WTC11 (cell line): ENCODE measurements at regions of chr22 and their contacts with region 1.

Region 1: GRCh38 chr22:37824674-37825641 is 1.8 kb downstream of the GALR3 start:
- DNase-seq: peak; percentile 63
- ATAC-seq: peak; percentile 68
- H3K4me3 Mint-ChIP-seq: peak overlapping the region; percentile 57
- H3K27ac Mint-ChIP-seq: no peak overlapping the region
- H3K4me1 Mint-ChIP-seq: peaks cover 28% of the 10 kb centered on the region
- H3K27me3 Mint-ChIP-seq: peaks cover 51% of the 10 kb centered on the region
- CTCF ChIP-seq: no peak

Region 2: GRCh38 chr22:37303821-37304274 is 521.1 kb before region 1 on chr22:
- CTCF ChIA-PET with region 1: no interaction called
- POLR2A ChIA-PET with region 1: no interaction called
- DNase-seq: no peak
- ATAC-seq: no peak
- H3K4me3 Mint-ChIP-seq: no peak overlapping the region
- H3K27ac Mint-ChIP-seq: no peak overlapping the region
- H3K4me1 Mint-ChIP-seq: peaks cover 38% of the 10 kb centered on the region
- H3K27me3 Mint-ChIP-seq: peaks cover 10% of the 10 kb centered on the region
- CTCF ChIP-seq: no peak

Region 3: GRCh38 chr22:37636186-37636948 is 188.6 kb before region 1 on chr22:
- CTCF ChIA-PET with region 1: no interaction called
- POLR2A ChIA-PET with region 1: no interaction called
- DNase-seq: no peak
- ATAC-seq: no peak
- H3K4me3 Mint-ChIP-seq: no peak overlapping the region
- H3K27ac Mint-ChIP-seq: no peak overlapping the region
- H3K4me1 Mint-ChIP-seq: peaks cover 29% of the 10 kb centered on the region
- H3K27me3 Mint-ChIP-seq: no peaks in the 10 kb centered on the region
- CTCF ChIP-seq: no peak

Region 4: DNA sequence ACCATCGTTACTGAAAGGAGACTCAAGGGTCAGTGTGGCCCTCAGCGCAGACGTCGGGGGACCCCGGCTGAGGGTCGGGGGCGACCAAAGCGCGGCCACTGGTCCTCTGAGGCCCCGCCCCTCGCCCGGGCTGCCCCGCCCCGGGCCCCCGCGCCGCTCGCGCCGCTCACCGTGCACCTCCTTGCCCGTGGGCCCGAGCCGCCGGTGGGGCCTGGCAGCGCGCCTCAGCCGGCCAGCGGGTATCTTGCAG is 18.7 kb after region 1 on chr22:
- CTCF ChIA-PET with region 1: interaction called, 11 read pairs
- POLR2A ChIA-PET with region 1: no interaction called
- DNase-seq: peak; percentile 59
- ATAC-seq: peak; percentile 19
- H3K4me3 Mint-ChIP-seq: peak overlapping the region; percentile 92
- H3K27ac Mint-ChIP-seq: peak overlapping the region; percentile 97
- H3K4me1 Mint-ChIP-seq: peaks cover 19% of the 10 kb centered on the region
- H3K27me3 Mint-ChIP-seq: no peaks in the 10 kb centered on the region
- CTCF ChIP-seq: no peak